ENCODE measurements at regions of chr12 and their contacts with region 1.

Region 1: GRCh38 chr12:124578445-124578844 is 11.0 kb upstream of the NCOR2 start:
- DNase-seq: no peak
- H3K4me3 ChIP-seq: no peak overlapping the region
- H3K27ac ChIP-seq: no peak overlapping the region
- H3K4me1 ChIP-seq: no peaks in the 10 kb centered on the region
- H3K27me3 ChIP-seq: no peaks in the 10 kb centered on the region
- CTCF ChIP-seq: no peak
- POLR2A ChIP-seq: no peak

Region 2: DNA sequence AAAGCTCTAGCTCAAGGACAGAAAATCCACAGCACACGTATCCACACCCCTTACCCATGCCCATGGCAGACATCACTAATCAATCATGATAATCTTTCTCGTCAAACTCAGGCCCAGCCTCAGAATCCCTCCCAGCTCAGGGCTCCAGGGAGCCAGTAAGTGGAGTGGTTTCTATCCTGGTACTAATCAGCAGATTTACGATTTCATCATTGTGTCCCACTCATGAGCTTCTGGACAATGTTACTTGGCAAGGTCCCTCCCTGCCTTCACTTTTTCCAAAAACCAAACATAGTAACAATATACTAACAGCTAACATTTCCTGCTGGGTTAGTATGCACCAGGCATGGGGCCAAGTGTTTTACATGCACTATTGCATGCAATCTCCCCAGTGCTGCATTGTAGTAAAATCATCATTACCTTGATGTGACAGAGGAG is 34.7 kb after region 1 on chr12:
- intact Hi-C with region 1: loop called (anchors 5 kb)
- DNase-seq: peak; percentile 44
- H3K4me3 ChIP-seq: no peak overlapping the region
- H3K27ac ChIP-seq: no peak overlapping the region
- H3K4me1 ChIP-seq: peaks cover 23% of the 10 kb centered on the region
- H3K27me3 ChIP-seq: no peaks in the 10 kb centered on the region
- CTCF ChIP-seq: no peak
- POLR2A ChIP-seq: no peak

Measured in prostate gland (tissue), 2 donors.